Naive thymus-derived CD4-positive, alpha-beta T cell (primary cell): ENCODE measurements at regions of chr14 and their contacts with region 1.

Region 1: GRCh38 chr14:98138666-98139065 is 1133.3 kb downstream of the BCL11B start:
- DNase-seq: peak; percentile 35 to 87 (median 81)
- ATAC-seq: peak; percentile 75
- H3K4me3 ChIP-seq: peak overlapping the region; percentile 52
- H3K4me3 Mint-ChIP-seq: peak overlapping the region; percentile 75 to 99 (median 93)
- H3K27ac ChIP-seq: peak overlapping the region; percentile 78
- H3K27ac Mint-ChIP-seq: peak overlapping the region; percentile 90 to 99 (median 96)
- H3K4me1 ChIP-seq: peaks cover 70 to 76% of the 10 kb centered on the region in 2 donors
- H3K4me1 Mint-ChIP-seq: peaks cover 66 to 100% (median 96%) of the 10 kb centered on the region in 7 donors
- H3K27me3 ChIP-seq: no peaks in the 10 kb centered on the region
- H3K27me3 Mint-ChIP-seq: no peaks in the 10 kb centered on the region

Region 2: DNA sequence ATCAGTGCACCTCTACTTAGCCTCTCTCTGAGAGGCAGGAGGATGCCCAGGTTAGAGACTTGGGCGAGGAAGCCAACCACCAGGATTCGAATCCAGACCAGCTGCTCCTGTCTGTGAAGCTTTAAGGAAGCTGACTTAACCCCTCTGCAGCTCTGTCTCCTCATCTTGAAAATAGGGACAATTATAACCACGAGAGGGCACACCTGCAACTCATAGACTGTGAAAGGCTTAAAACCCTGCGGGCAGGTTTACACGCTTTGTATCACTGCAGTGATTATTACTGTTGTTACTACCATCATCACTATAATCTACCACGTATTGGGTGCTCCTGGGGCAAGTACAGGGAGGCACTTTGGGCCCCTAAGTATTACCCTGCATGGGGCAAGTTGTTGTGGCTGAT is 961.7 kb before region 1 on chr14:
- CTCF ChIA-PET with region 1: interaction called, 3 read pairs
- POLR2A ChIA-PET with region 1: no interaction called
- intact Hi-C with region 1: loop called in 1 of 2 experiments (anchors 10 kb)
- DNase-seq: peak in 7 of 9 donors; percentile 36 to 63 (median 49)
- ATAC-seq: peak; percentile 67
- H3K4me3 ChIP-seq: no peak overlapping the region
- H3K4me3 Mint-ChIP-seq: peak overlapping the region in 4 of 10 donors; percentile 28 to 51 (median 36)
- H3K27ac ChIP-seq: no peak overlapping the region
- H3K27ac Mint-ChIP-seq: peak overlapping the region in 5 of 9 donors; percentile 32 to 78 (median 63)
- H3K4me1 ChIP-seq: peaks cover 0 to 3% of the 10 kb centered on the region in 2 donors
- H3K4me1 Mint-ChIP-seq: peaks cover 0 to 41% (median 32%) of the 10 kb centered on the region in 7 donors
- H3K27me3 ChIP-seq: no peaks in the 10 kb centered on the region
- H3K27me3 Mint-ChIP-seq: peaks cover 0 to 2% (median 0%) of the 10 kb centered on the region in 5 donors

Region 3: GRCh38 chr14:97724265-97724731 is 414.4 kb before region 1 on chr14:
- CTCF ChIA-PET with region 1: no interaction called
- POLR2A ChIA-PET with region 1: interaction called, 5 read pairs
- intact Hi-C with region 1: loop called in 1 of 2 experiments (anchors 5 kb)
- DNase-seq: peak in 8 of 9 donors; percentile 38 to 67 (median 59)
- ATAC-seq: peak; percentile 77
- H3K4me3 ChIP-seq: peak overlapping the region; percentile 57
- H3K4me3 Mint-ChIP-seq: peak overlapping the region; percentile 78 to 92 (median 84)
- H3K27ac ChIP-seq: peak overlapping the region; percentile 80
- H3K27ac Mint-ChIP-seq: peak overlapping the region; percentile 92 to 99 (median 97)
- H3K4me1 ChIP-seq: peaks cover 28 to 72% of the 10 kb centered on the region in 2 donors
- H3K4me1 Mint-ChIP-seq: peaks cover 51 to 94% (median 86%) of the 10 kb centered on the region in 7 donors
- H3K27me3 ChIP-seq: no peaks in the 10 kb centered on the region
- H3K27me3 Mint-ChIP-seq: no peaks in the 10 kb centered on the region

Region 4: GRCh38 chr14:98173305-98173704 is 34.6 kb after region 1 on chr14:
- CTCF ChIA-PET with region 1: interaction called, 25 read pairs
- POLR2A ChIA-PET with region 1: interaction called, 501 read pairs
- intact Hi-C with region 1: loop called (anchors 1 to 2 kb)
- DNase-seq: peak in 7 of 9 donors; percentile 71 to 84 (median 82)
- ATAC-seq: peak; percentile 78
- H3K4me3 ChIP-seq: peak overlapping the region; percentile 33
- H3K4me3 Mint-ChIP-seq: peak overlapping the region; percentile 74 to 90 (median 84)
- H3K27ac ChIP-seq: peak overlapping the region; percentile 81
- H3K27ac Mint-ChIP-seq: peak overlapping the region; percentile 89 to 100 (median 97)
- H3K4me1 ChIP-seq: peaks cover 100% of the 10 kb centered on the region in 2 donors
- H3K4me1 Mint-ChIP-seq: peaks cover 59 to 100% (median 99%) of the 10 kb centered on the region in 7 donors
- H3K27me3 ChIP-seq: no peaks in the 10 kb centered on the region
- H3K27me3 Mint-ChIP-seq: no peaks in the 10 kb centered on the region

Region 5: DNA sequence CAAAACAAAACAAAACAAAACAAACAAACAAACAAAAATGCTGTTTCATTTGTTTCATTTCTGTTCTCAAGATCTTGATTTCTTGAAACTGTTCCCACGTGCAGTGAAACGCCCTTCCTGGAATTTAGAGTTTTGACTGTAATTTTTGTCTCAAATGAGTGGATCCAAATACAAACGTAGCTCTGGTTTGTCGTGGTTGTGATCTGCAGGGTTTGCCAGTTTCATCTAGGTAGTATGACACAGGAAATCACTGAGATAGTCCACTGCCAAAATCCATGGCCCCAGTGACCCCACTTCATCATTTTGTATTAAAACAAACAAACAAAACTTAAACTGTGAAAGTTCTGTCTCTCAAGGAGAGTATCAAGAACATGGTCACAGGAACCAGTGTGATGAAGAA is 294.8 kb after region 1 on chr14:
- CTCF ChIA-PET with region 1: no interaction called
- POLR2A ChIA-PET with region 1: no interaction called
- intact Hi-C with region 1: loop called in 1 of 2 experiments (anchors 2 kb)
- DNase-seq: no peak
- ATAC-seq: no peak
- H3K4me3 ChIP-seq: no peak overlapping the region
- H3K4me3 Mint-ChIP-seq: peak overlapping the region in 6 of 10 donors; percentile 9 to 71 (median 59)
- H3K27ac ChIP-seq: no peak overlapping the region
- H3K27ac Mint-ChIP-seq: peak overlapping the region in 8 of 9 donors; percentile 20 to 79 (median 56)
- H3K4me1 ChIP-seq: no peaks in the 10 kb centered on the region
- H3K4me1 Mint-ChIP-seq: peaks cover 9 to 40% (median 26%) of the 10 kb centered on the region in 7 donors
- H3K27me3 ChIP-seq: no peaks in the 10 kb centered on the region
- H3K27me3 Mint-ChIP-seq: no peaks in the 10 kb centered on the region

Region 6: DNA sequence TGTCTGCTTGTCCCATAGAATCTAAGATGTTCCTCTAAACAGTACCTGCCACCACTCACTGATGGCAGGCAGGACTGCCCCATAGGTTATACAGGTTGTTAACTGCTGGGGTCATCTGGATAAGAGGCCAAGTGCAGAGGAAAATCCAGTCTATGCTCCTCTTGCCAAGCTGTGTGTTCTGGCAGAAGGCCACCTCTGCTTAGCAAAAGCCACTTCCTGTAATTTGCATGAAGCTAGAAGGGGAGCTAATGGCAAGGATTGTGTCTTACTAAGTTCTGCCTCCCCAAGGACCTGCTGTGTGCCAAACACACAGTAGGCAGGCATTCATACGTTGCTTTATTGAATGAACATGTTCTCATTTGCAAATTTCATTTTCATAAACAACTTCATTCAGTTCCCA is 688.0 kb after region 1 on chr14:
- CTCF ChIA-PET with region 1: no interaction called
- POLR2A ChIA-PET with region 1: no interaction called
- intact Hi-C with region 1: no loop called
- DNase-seq: peak in 5 of 9 donors; percentile 13 to 30 (median 20)
- ATAC-seq: no peak
- H3K4me3 ChIP-seq: no peak overlapping the region
- H3K4me3 Mint-ChIP-seq: no peak overlapping the region
- H3K27ac ChIP-seq: no peak overlapping the region
- H3K27ac Mint-ChIP-seq: peak overlapping the region in 1 of 9 donors; percentile 23
- H3K4me1 ChIP-seq: peaks cover 7 to 9% of the 10 kb centered on the region in 2 donors
- H3K4me1 Mint-ChIP-seq: peaks cover 0 to 34% (median 18%) of the 10 kb centered on the region in 7 donors
- H3K27me3 ChIP-seq: no peaks in the 10 kb centered on the region
- H3K27me3 Mint-ChIP-seq: peaks cover 0 to 2% (median 0%) of the 10 kb centered on the region in 5 donors

Region 7: GRCh38 chr14:98931911-98932310 is 793.2 kb after region 1 on chr14:
- CTCF ChIA-PET with region 1: interaction called, 7 read pairs
- POLR2A ChIA-PET with region 1: interaction called, 6 read pairs
- intact Hi-C with region 1: loop called in 1 of 2 experiments (anchors 10 kb)
- DNase-seq: peak; percentile 31 to 90 (median 88)
- ATAC-seq: peak; percentile 97
- H3K4me3 ChIP-seq: peak overlapping the region; percentile 40
- H3K4me3 Mint-ChIP-seq: peak overlapping the region; percentile 66 to 92 (median 80)
- H3K27ac ChIP-seq: peak overlapping the region; percentile 66
- H3K27ac Mint-ChIP-seq: peak overlapping the region; percentile 82 to 98 (median 94)
- H3K4me1 ChIP-seq: peaks cover 31 to 76% of the 10 kb centered on the region in 2 donors
- H3K4me1 Mint-ChIP-seq: peaks cover 51 to 100% (median 99%) of the 10 kb centered on the region in 7 donors
- H3K27me3 ChIP-seq: no peaks in the 10 kb centered on the region
- H3K27me3 Mint-ChIP-seq: peaks cover 0 to 2% (median 0%) of the 10 kb centered on the region in 5 donors

Region 8: GRCh38 chr14:99415496-99416281 is 1277.0 kb after region 1 on chr14:
- CTCF ChIA-PET with region 1: no interaction called
- POLR2A ChIA-PET with region 1: no interaction called
- intact Hi-C with region 1: loop called in 1 of 2 experiments (anchors 1 kb)
- DNase-seq: peak in 8 of 9 donors; percentile 49 to 81 (median 75)
- ATAC-seq: peak; percentile 98
- H3K4me3 ChIP-seq: no peak overlapping the region
- H3K4me3 Mint-ChIP-seq: no peak overlapping the region
- H3K27ac ChIP-seq: no peak overlapping the region
- H3K27ac Mint-ChIP-seq: peak overlapping the region in 3 of 9 donors; percentile 56 to 73 (median 73)
- H3K4me1 ChIP-seq: peaks cover 0 to 4% of the 10 kb centered on the region in 2 donors
- H3K4me1 Mint-ChIP-seq: peaks cover 2 to 19% (median 6%) of the 10 kb centered on the region in 7 donors
- H3K27me3 ChIP-seq: no peaks in the 10 kb centered on the region
- H3K27me3 Mint-ChIP-seq: no peaks in the 10 kb centered on the region